ENCODE measurements at regions of chr6 and their contacts with region 1.

Region 1: DNA sequence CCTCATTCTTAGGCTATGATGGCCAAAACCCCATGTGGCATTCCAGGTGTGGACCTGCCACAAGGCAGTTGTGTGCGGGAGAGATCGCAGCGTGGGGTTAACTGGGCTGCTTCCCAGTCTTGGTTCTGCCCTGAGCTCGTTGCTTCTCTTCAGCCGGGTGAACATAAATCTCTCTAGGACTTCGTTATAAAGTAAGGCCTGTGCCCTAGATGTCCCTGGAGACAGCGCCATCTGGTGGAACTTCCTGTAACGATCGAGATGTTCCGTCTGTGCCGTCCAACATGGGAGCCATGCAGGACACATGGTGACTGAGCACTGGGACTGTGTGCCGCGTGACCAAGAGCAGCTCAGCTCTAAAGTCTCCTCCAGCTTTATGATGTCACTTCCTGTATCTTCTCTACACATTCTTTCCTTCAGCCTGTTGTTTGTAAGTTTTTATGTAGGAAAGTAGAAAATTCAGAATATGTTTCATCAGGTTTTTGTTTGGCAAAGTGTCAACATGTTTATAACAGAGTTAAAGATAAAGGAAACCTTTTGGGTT is 26.8 kb upstream of the RPP40 start:
- DNase-seq: peak; percentile 42
- ATAC-seq: peak; percentile 86
- H3K4me3 ChIP-seq: no peak overlapping the region
- H3K27ac ChIP-seq: no peak overlapping the region
- H3K4me1 ChIP-seq: no peaks in the 10 kb centered on the region; the same call in none of the 2 replicates
- H3K27me3 ChIP-seq: no peaks in the 10 kb centered on the region
- CTCF ChIP-seq: peak; percentile 84

Region 2: GRCh38 chr6:4459052-4459451 is 571.6 kb before region 1 on chr6:
- CTCF ChIA-PET with region 1: no interaction called
- POLR2A ChIA-PET with region 1: no interaction called
- in situ Hi-C with region 1: no loop called
- intact Hi-C with region 1: loop called (anchors 10 kb)
- DNase-seq: no peak
- ATAC-seq: no peak
- H3K4me3 ChIP-seq: no peak overlapping the region
- H3K27ac ChIP-seq: no peak overlapping the region
- H3K4me1 ChIP-seq: no peaks in the 10 kb centered on the region
- H3K27me3 ChIP-seq: no peaks in the 10 kb centered on the region
- CTCF ChIP-seq: no peak

Region 3: DNA sequence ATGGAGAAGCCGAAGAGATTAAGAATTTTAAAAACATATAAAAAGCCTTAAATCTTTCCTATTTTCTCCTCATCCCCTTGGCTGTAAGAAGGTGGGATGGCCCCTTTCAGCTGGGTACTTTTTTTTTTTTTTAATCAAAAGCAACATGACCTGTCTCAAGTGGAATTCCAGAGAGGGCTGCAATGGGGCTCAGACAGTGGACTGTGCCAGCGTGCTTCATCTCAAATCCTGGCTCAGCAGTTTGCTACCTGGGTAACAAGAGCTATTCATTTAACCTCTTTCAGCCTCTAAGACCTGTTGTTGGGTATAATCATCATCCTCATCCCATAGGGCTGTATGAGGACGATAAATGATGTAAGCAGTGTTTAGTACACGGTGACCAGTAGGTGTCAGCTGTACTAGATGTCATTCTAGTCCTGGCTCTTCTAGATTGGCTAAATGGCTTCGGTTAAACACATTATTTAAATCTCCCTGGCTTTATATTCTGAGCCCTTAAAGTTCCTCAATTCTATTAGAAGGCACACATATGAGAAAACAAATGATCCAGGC is 47.5 kb after region 1 on chr6:
- CTCF ChIA-PET with region 1: no interaction called
- POLR2A ChIA-PET with region 1: no interaction called
- in situ Hi-C with region 1: no loop called
- intact Hi-C with region 1: no loop called
- DNase-seq: no peak
- ATAC-seq: peak; percentile 87
- H3K4me3 ChIP-seq: no peak overlapping the region
- H3K27ac ChIP-seq: no peak overlapping the region
- H3K4me1 ChIP-seq: no peaks in the 10 kb centered on the region
- H3K27me3 ChIP-seq: no peaks in the 10 kb centered on the region
- CTCF ChIP-seq: no peak; the same call in 1 of the 2 replicates

Measured in Panc1 (cell line).